ENCODE measurements at regions of chr1 and their contacts with region 1.

Region 1: DNA sequence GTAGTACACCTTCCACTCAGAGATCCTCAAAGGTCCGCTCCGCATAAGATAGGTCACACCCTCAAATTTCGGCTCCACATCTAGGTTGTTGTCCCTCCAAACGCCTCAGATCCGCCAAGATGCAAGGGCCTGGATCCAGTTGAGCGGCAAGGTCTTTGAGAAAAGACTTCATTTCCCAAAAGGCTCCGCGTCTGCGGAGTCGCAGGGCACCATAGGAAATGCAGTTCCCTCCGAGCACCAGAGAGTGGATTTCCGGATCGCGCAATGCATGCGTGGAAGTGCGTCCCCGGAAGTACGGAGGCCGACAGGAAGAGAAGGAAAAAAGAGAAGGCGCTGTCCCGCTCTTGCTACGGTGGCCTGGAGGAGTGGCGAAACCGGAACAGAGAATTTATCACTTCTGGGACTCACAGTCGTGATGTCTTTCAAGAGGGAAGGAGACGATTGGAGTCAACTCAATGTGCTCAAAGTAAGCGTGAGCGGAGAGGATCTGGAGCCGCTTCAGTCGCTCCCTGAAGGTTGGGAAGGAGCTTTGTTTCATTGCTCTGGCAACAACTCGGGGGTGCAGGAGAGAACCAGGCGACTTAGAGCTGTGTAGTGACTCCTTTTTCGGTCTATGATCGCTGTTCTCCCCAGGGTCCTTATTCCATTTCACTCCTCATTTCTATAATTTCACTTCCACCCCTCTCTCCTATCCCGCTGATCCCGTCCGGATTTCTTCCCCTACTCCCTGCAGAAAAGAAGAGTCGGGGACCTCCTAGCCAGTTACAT is at the starts of genes LYSMD1 and SCNM1:
- DNase-seq: peak; percentile 97 to 98
- ATAC-seq: peak; percentile 81 to 85
- H3K4me3 ChIP-seq: peak within 1 kb of the TSS; percentile 82 to 97 (median 84)
- H3K27ac ChIP-seq: peak within 1 kb of the TSS; percentile 91 to 99 (median 91)
- H3K4me1 ChIP-seq: peaks cover 50 to 54% of the 10 kb centered on the region in 2 donors
- H3K27me3 ChIP-seq: no peaks in the 10 kb centered on the region
- CTCF ChIP-seq: peak in 3 of 5 experiments; percentile 11 to 69 (median 51)
- POLR2A ChIP-seq: peak; percentile 43 to 63
- total RNA-seq, gene LYSMD1: 11.4 to 14.6 (median 13.7) TPM
- total RNA-seq, gene SCNM1: 17.7 to 56.1 (median 35.6) TPM

Region 2: GRCh38 chr1:151070474-151071276 is 95.2 kb before region 1 on chr1 and contains the start of gene GABPB2:
- in situ Hi-C with region 1: no loop called
- intact Hi-C with region 1: loop called (anchors 2 kb)
- DNase-seq: peak; percentile 88 to 94
- ATAC-seq: peak; percentile 91
- H3K4me3 ChIP-seq: peak within 1 kb of the TSS; percentile 85 to 96 (median 92)
- H3K27ac ChIP-seq: peak within 1 kb of the TSS; percentile 94 to 99 (median 98)
- H3K4me1 ChIP-seq: peaks cover 9 to 19% of the 10 kb centered on the region in 2 donors
- H3K27me3 ChIP-seq: no peaks in the 10 kb centered on the region
- CTCF ChIP-seq: peak; percentile 57 to 94 (median 90)
- POLR2A ChIP-seq: peak; percentile 43 to 50
- total RNA-seq, gene GABPB2: 11.9 to 20.5 (median 17.9) TPM

Region 3: GRCh38 chr1:151189638-151190445 is 23.9 kb after region 1 on chr1 and contains the start of gene VPS72:
- in situ Hi-C with region 1: no loop called
- intact Hi-C with region 1: loop called (anchors 1 kb)
- DNase-seq: peak; percentile 82 to 89
- ATAC-seq: peak; percentile 74 to 83
- H3K4me3 ChIP-seq: peak within 1 kb of the TSS; percentile 81 to 98 (median 86)
- H3K27ac ChIP-seq: peak within 1 kb of the TSS; percentile 92 to 99 (median 94)
- H3K4me1 ChIP-seq: peaks cover 30 to 34% of the 10 kb centered on the region in 2 donors
- H3K27me3 ChIP-seq: no peaks in the 10 kb centered on the region
- CTCF ChIP-seq: peak in 4 of 5 experiments; percentile 27 to 45 (median 40)
- POLR2A ChIP-seq: peak; percentile 67 to 74
- total RNA-seq, gene VPS72: 62.2 to 95.8 (median 68.9) TPM